ENCODE measurements at regions of chr14 and their contacts with region 1.

Region 1: GRCh38 chr14:104094709-104095438 is 9.4 kb downstream of the ASPG start:
- DNase-seq: peak; percentile 83
- H3K4me3 Mint-ChIP-seq: no peak overlapping the region
- H3K27ac Mint-ChIP-seq: no peak overlapping the region
- H3K4me1 Mint-ChIP-seq: peaks cover 4% of the 10 kb centered on the region
- H3K27me3 Mint-ChIP-seq: peaks cover 3% of the 10 kb centered on the region

Region 2: GRCh38 chr14:104116756-104117255 is 21.9 kb after region 1 on chr14:
- CTCF ChIA-PET with region 1: no interaction called
- intact Hi-C with region 1: no loop called
- DNase-seq: no peak
- H3K4me3 Mint-ChIP-seq: no peak overlapping the region
- H3K27ac Mint-ChIP-seq: no peak overlapping the region
- H3K4me1 Mint-ChIP-seq: no peaks in the 10 kb centered on the region
- H3K27me3 Mint-ChIP-seq: peaks cover 25% of the 10 kb centered on the region

Region 3: DNA sequence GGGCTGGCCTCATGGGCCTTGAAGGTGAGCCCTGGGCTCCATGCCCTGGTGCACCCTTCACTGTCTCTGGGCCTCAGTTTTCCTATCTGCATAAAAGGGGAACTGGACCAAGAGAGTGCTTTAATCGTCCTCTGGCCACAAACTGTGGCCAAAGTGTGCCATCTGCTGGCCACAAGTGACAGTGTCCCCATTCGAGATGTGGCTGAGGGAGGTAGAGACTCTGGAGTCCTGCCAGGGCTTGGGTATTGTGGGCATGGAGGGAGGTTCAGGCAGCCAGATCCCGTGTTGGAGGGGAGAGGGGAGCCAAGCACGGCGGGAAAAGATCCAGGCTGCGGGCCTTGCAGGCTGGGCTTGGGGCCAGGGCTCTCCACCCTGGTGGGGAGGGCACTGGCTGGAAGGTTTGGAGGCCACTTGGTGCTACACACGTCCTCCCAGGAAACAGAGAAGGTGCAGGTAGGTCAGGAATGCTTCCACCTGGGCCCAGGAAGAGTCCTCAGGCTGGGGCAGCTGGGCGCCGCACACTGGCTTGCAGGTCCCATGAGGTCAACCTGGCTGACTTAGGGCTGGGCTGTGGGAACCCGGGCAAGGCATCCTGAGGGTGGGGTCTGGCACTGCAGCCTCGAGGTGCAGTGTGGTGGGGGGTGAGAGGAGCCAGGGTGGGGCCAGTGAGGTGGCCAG is 36.2 kb after region 1 on chr14:
- CTCF ChIA-PET with region 1: interaction called, 8 read pairs
- intact Hi-C with region 1: loop called (anchors 1 kb)
- DNase-seq: peak; percentile 35
- H3K4me3 Mint-ChIP-seq: no peak overlapping the region
- H3K27ac Mint-ChIP-seq: no peak overlapping the region
- H3K4me1 Mint-ChIP-seq: peaks cover 3% of the 10 kb centered on the region
- H3K27me3 Mint-ChIP-seq: peaks cover 38% of the 10 kb centered on the region

Region 4: DNA sequence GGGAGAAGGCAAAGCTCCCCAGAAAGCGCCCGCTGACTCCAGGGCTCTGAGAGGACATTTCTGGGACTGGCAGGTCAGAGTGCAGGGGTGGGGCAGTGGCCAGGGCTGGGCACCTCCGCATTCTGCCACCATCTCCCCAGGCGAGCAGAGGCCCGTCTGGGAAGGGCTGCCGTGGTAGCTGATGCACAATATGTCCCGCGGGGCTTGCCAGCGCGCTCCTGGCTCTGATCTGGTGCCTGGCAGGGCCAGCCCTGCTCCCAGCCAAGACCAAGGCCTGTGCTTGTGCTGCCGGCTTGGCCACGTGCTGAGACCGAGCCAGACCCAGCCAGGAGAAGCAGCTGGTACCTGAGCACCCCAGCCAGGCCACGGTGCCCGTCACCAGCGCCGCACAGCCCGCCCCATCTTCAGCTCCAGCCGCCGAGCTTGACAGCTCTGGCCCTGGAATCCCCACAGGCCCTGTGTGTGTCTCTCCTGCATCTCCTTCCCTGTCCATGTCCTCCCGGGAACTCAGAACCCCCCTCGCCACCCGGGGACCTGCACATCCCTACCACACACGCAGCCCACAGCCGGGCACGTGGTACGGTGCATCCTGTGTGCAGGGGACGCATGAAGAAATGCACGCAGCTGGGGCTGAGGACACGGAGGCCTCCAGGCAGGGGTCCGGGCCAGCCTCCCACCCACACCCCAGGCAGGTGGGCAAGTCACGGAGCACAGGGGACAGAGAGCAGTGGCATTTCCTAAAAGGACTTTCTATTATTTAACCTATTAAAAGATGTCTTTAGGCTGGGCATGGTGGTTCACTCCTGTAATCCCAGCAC is 416.1 kb after region 1 on chr14:
- CTCF ChIA-PET with region 1: no interaction called
- intact Hi-C with region 1: no loop called
- DNase-seq: no peak
- H3K4me3 Mint-ChIP-seq: no peak overlapping the region
- H3K27ac Mint-ChIP-seq: no peak overlapping the region
- H3K4me1 Mint-ChIP-seq: no peaks in the 10 kb centered on the region
- H3K27me3 Mint-ChIP-seq: peaks cover 2% of the 10 kb centered on the region

Region 5: GRCh38 chr14:104639889-104640548 is 545.1 kb after region 1 on chr14:
- CTCF ChIA-PET with region 1: no interaction called
- intact Hi-C with region 1: loop called (anchors 1 kb)
- DNase-seq: peak; percentile 59
- H3K4me3 Mint-ChIP-seq: no peak overlapping the region
- H3K27ac Mint-ChIP-seq: no peak overlapping the region
- H3K4me1 Mint-ChIP-seq: no peaks in the 10 kb centered on the region
- H3K27me3 Mint-ChIP-seq: peaks cover 8% of the 10 kb centered on the region

Measured in activated naive CD4-positive, alpha-beta T cell treated with anti-CD3 and anti-CD28 coated beads for 36 hours (primary cell).